ENCODE measurements at regions of chr16 and their contacts with region 1.

Region 1: GRCh38 chr16:74309789-74310781 is 13.5 kb downstream of the PSMD7 start:
- DNase-seq: no peak
- H3K4me3 ChIP-seq: no peak overlapping the region
- H3K27ac ChIP-seq: no peak overlapping the region
- H3K4me1 ChIP-seq: no peaks in the 10 kb centered on the region
- H3K27me3 ChIP-seq: no peaks in the 10 kb centered on the region
- CTCF ChIP-seq: peak; percentile 61 to 71 (median 65)
- EP300 ChIP-seq: no peak
- POLR2A ChIP-seq: no peak

Region 2: DNA sequence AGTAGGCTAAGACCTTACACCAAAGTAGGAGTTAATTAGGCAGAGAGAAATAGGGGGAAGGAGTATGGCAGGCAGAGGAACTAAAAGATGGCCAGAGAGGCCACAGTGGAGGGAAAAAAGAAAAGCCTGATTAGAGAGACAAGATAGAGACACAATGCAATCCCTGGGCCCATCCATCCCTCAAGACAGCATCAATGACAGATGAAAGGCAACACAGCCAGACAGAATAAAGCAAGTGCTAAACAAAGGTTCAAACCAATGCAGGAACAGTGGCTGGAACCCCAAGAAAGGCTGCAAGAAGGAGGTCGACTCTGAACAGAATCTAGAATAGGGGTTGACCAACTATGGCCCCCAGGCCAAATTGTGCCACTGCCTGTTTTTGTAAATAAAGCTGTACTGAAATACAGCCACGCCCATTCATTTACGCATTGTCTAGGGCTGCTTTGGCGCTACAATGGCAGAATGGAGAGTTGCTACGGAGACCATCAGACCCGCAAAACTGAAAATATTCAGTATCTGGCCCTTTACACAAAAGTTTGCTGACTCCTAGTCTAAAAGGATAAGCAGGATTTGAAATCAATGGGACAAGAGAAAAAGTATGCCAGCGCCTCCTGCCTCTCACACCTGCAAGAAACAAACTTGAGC is 486.8 kb before region 1 on chr16:
- in situ Hi-C with region 1: no loop called
- intact Hi-C with region 1: no loop called
- DNase-seq: no peak
- H3K4me3 ChIP-seq: no peak overlapping the region
- H3K27ac ChIP-seq: no peak overlapping the region
- H3K4me1 ChIP-seq: no peaks in the 10 kb centered on the region
- H3K27me3 ChIP-seq: no peaks in the 10 kb centered on the region
- CTCF ChIP-seq: no peak
- EP300 ChIP-seq: no peak
- POLR2A ChIP-seq: no peak

Region 3: GRCh38 chr16:74094514-74094913 is 215.6 kb before region 1 on chr16:
- in situ Hi-C with region 1: no loop called
- intact Hi-C with region 1: no loop called
- DNase-seq: no peak
- H3K4me3 ChIP-seq: no peak overlapping the region
- H3K27ac ChIP-seq: no peak overlapping the region
- H3K4me1 ChIP-seq: no peaks in the 10 kb centered on the region
- H3K27me3 ChIP-seq: no peaks in the 10 kb centered on the region
- CTCF ChIP-seq: no peak
- EP300 ChIP-seq: no peak
- POLR2A ChIP-seq: no peak

Region 4: DNA sequence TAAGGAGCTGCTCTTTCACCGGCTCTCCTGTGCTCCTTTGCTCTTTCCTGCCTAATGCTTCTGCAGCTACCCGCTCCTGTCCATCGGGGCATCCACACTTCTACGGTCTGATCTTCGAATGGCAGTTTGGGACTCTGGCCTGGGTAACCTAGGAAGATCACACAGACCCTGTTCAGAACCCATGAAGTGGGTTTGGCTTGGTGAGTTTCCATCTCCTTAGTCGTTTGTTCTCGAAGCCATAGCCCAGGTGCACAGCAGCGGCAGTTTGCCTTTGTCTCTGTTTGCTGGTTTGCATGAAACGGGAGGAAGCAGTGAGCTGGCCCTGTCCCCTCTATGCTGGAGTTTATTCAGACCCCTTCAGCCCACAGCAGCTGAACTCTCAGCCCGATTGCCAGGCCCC is 15.6 kb after region 1 on chr16:
- in situ Hi-C with region 1: no loop called
- intact Hi-C with region 1: no loop called
- DNase-seq: no peak
- H3K4me3 ChIP-seq: no peak overlapping the region
- H3K27ac ChIP-seq: no peak overlapping the region
- H3K4me1 ChIP-seq: peaks cover 0 to 20% (median 0%) of the 10 kb centered on the region in 4 donors
- H3K27me3 ChIP-seq: no peaks in the 10 kb centered on the region
- CTCF ChIP-seq: no peak
- EP300 ChIP-seq: no peak
- POLR2A ChIP-seq: no peak

Region 5: GRCh38 chr16:74438492-74439041 is 128.5 kb after region 1 on chr16:
- in situ Hi-C with region 1: loop called in 1 of 4 experiments (anchors 10 kb)
- intact Hi-C with region 1: no loop called
- DNase-seq: no peak
- H3K4me3 ChIP-seq: no peak overlapping the region
- H3K27ac ChIP-seq: no peak overlapping the region
- H3K4me1 ChIP-seq: no peaks in the 10 kb centered on the region
- H3K27me3 ChIP-seq: no peaks in the 10 kb centered on the region
- CTCF ChIP-seq: no peak
- EP300 ChIP-seq: no peak
- POLR2A ChIP-seq: no peak

Region 6: GRCh38 chr16:74623214-74623842 is 313.2 kb after region 1 on chr16:
- in situ Hi-C with region 1: loop called in 2 of 4 experiments (anchors 25 kb)
- intact Hi-C with region 1: no loop called
- DNase-seq: no peak
- H3K4me3 ChIP-seq: no peak overlapping the region
- H3K27ac ChIP-seq: no peak overlapping the region
- H3K4me1 ChIP-seq: no peaks in the 10 kb centered on the region
- H3K27me3 ChIP-seq: no peaks in the 10 kb centered on the region
- CTCF ChIP-seq: peak; percentile 51 to 71 (median 59)
- EP300 ChIP-seq: no peak
- POLR2A ChIP-seq: no peak

Measured in transverse colon (tissue), 4 donors.